ENCODE measurements at regions of chr2 and their contacts with region 1.

Region 1: GRCh38 chr2:17538844-17539554 is 1.5 kb upstream of the VSNL1 start:
- DNase-seq: peak; percentile 66 to 87 (median 82)
- ATAC-seq: peak; percentile 79 to 93 (median 90)
- H3K4me3 ChIP-seq: peak overlapping the region; percentile 42 to 72 (median 57)
- H3K27ac ChIP-seq: peak overlapping the region; percentile 68 to 93 (median 83)
- H3K4me1 ChIP-seq: peaks cover 0 to 13% (median 2%) of the 10 kb centered on the region in 12 donors
- H3K27me3 ChIP-seq: peaks cover 0 to 68% (median 26%) of the 10 kb centered on the region in 9 donors
- CTCF ChIP-seq: no peak
- POLR2A ChIP-seq: peak in 1 of 2 donors; percentile 15

Region 2: DNA sequence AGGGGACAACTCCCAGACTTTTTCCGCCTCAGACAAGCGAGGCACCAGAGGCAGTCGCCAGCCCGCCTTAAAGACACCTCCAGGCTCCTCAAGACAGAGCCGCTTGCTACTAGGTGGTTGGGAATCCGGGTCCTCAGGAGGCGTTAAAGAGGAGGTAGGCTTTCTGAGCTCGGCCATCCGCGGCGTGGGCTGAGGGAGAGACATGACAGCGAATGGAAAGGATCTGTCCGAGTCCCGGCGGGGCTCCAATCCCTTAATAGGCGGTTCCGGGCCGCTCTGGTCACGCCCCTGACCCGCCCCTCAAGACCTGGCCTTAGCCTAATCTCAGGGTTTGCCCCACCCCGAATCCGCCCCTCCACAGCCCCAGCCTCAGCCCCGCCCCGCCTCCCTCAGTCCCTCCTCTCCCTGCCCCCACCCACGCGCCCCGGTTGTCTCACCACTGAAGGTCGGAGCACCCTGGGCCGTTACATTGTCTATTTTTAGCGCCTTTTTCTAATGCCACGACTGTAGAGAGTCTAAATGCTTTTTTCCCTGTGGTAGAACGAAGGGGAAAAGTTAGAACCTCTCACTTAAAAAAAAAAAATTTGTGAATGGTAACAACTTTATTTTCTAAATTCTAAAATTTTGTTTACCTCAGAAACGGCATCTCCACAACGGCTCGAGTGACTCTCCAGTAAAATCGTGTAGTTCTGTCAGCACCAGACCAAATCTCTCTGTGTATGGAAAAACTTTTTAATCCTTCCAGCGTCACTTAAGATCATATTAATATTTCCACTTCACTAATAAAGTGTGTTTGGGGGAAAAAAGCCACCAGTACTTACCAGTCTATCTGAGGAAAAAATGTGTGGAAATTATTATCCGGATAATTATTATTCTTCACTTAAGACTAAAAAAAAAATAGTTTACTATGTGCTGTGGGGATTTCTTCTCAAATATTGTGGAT is 20.5 kb before region 1 on chr2 and contains the start of gene RAD51AP2:
- intact Hi-C with region 1: loop called in 2 of 10 experiments (anchors 2 kb)
- DNase-seq: peak; percentile 83 to 94 (median 89)
- ATAC-seq: peak; percentile 99 to 100 (median 99)
- H3K4me3 ChIP-seq: peak within 1 kb of the TSS in 11 of 12 donors; percentile 35 to 56 (median 48)
- H3K27ac ChIP-seq: peak within 1 kb of the TSS; percentile 72 to 92 (median 84)
- H3K4me1 ChIP-seq: peaks cover 0 to 14% (median 0%) of the 10 kb centered on the region in 12 donors
- H3K27me3 ChIP-seq: peaks cover 0 to 21% (median 0%) of the 10 kb centered on the region in 9 donors
- CTCF ChIP-seq: no peak
- POLR2A ChIP-seq: peak in 1 of 2 donors; percentile 31
- total RNA-seq, gene RAD51AP2: 0.07 to 0.19 (median 0.16) TPM in 8 of 9 donors, not detected in the other

Region 3: DNA sequence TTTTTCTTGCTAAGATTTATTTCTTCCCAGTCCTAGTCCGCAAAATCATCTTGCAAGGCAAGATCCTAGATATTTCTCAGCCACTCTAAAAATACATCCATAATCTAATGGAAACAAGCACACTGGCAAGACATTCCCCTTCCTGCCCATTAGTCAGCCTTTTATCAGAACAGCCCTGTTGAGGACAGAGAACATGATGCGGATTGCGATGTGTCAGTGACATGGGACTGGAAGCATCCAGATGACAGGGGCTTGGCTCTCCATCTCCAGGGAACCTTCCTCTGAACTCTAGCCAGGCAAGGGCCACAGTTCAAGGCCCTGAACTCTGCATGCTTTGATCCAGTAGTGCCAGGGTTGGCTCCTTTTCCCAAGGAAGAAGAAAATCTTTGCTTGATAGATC is 71.5 kb after region 1 on chr2:
- intact Hi-C with region 1: loop called in 1 of 10 experiments (anchors 2 kb)
- DNase-seq: peak in 4 of 5 donors; percentile 64 to 81 (median 72)
- ATAC-seq: peak; percentile 95 to 98 (median 97)
- H3K4me3 ChIP-seq: no peak overlapping the region
- H3K27ac ChIP-seq: peak overlapping the region in 11 of 12 donors; percentile 40 to 89 (median 68)
- H3K4me1 ChIP-seq: peaks cover 0 to 31% (median 12%) of the 10 kb centered on the region in 12 donors
- H3K27me3 ChIP-seq: no peaks in the 10 kb centered on the region
- CTCF ChIP-seq: no peak
- POLR2A ChIP-seq: no peak

Region 4: GRCh38 chr2:17646081-17646554 is 107.1 kb after region 1 on chr2:
- intact Hi-C with region 1: loop called in 5 of 10 experiments (anchors 2 to 10 kb)
- DNase-seq: peak in 2 of 5 donors; percentile 43 to 49
- ATAC-seq: peak; percentile 52 to 73 (median 68)
- H3K4me3 ChIP-seq: no peak overlapping the region
- H3K27ac ChIP-seq: peak overlapping the region in 6 of 12 donors; percentile 2 to 50 (median 19)
- H3K4me1 ChIP-seq: peaks cover 0 to 47% (median 21%) of the 10 kb centered on the region in 12 donors
- H3K27me3 ChIP-seq: no peaks in the 10 kb centered on the region
- CTCF ChIP-seq: peak; percentile 72 to 91 (median 86)
- POLR2A ChIP-seq: no peak

Region 5: GRCh38 chr2:17661460-17661859 is 122.5 kb after region 1 on chr2:
- intact Hi-C with region 1: loop called in 1 of 10 experiments (anchors 5 kb)
- DNase-seq: no peak
- ATAC-seq: no peak
- H3K4me3 ChIP-seq: no peak overlapping the region
- H3K27ac ChIP-seq: no peak overlapping the region
- H3K4me1 ChIP-seq: peaks cover 0 to 6% (median 0%) of the 10 kb centered on the region in 12 donors
- H3K27me3 ChIP-seq: no peaks in the 10 kb centered on the region
- CTCF ChIP-seq: no peak
- POLR2A ChIP-seq: no peak

Measured in heart left ventricle (tissue), 16 donors.